ENCODE measurements at regions of chr2 and their contacts with region 1.

Region 1: DNA sequence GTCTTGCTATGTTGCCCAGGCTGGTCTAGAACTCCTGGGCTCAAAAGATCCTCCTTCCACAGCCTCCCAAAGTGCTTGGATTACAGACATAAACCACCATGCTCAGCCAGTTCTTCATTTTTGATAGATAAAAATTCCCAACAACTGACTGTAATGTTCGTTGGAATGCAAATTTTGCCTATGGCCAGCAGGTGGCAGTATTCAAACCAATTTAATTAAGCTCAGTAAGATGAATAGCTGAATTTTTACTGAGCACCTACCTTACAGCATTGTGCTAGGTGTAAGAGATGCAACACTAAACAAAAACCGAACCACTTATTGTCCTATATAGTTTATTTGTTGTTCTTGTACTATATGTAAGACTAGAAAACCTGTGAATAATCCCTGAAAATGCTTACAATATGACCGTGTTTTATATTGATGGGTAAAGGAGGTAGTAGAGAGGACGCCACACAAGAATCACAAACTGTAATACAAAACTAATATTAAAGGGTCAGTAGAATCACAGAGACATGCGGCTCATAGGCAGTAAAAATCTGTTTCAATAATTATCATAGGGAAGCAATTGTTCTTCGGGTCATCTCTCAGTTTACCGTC is 8.2 kb upstream of the TMEM182 start:
- DNase-seq: no peak
- ATAC-seq: no peak
- H3K4me3 Mint-ChIP-seq: no peak overlapping the region
- H3K27ac Mint-ChIP-seq: no peak overlapping the region
- H3K4me1 Mint-ChIP-seq: peaks cover 6% of the 10 kb centered on the region
- H3K27me3 Mint-ChIP-seq: no peaks in the 10 kb centered on the region
- CTCF ChIP-seq: peak; percentile 89

Region 2: DNA sequence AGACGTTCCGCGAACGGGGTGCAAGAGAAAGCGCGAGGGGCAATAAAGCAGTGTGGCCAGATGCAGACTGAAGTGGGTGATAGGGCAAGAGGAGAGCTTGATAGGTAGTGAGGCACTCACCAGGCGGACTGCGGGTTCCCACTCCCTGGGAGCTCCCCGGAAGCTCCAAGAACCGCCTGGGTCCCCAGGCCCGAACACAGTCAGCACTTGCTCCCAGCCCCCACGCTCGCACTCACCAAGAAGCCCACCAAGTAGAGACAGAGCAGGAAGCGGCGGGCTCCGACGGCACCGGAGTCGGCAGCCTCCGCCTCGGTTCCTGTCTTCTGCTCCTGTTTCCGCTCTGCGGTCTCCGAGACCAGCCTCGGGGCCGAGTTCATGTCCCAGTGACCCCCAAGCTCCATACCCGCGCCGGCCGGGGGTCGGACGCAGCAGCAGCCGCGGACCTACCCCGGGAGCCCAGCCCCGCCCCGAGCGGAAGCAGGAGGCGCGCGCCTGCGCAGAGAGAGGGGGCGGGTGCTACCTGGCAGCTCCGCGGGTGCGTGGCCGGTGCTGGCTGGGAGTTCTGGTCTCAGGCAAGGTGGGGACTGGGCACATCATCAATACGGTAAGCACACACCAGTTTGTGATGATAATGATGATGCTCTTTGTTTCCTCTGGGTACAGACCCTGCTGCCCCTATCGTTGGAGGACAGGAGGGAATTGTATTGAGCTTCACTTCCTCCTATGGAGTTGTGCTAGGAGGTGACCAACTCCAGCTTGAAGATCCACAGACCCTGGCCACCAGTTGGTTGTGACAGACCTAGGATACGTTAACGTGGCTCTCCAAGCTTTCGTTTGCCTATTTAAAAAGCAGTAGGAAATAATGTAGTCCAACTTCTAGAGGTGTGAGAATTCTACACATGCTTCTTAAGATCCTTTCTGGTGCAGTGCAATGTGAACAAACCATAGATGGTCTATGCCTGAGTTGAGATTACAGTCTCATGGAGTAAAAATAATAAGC is 17.0 kb before region 1 on chr2:
- CTCF ChIA-PET with region 1: interaction called, 18 read pairs
- POLR2A ChIA-PET with region 1: interaction called, 5 read pairs
- intact Hi-C with region 1: no loop called
- DNase-seq: peak; percentile 88
- ATAC-seq: peak; percentile 96
- H3K4me3 Mint-ChIP-seq: peak overlapping the region; percentile 97
- H3K27ac Mint-ChIP-seq: peak overlapping the region; percentile 85
- H3K4me1 Mint-ChIP-seq: peaks cover 35% of the 10 kb centered on the region
- H3K27me3 Mint-ChIP-seq: no peaks in the 10 kb centered on the region
- CTCF ChIP-seq: no peak

Region 3: DNA sequence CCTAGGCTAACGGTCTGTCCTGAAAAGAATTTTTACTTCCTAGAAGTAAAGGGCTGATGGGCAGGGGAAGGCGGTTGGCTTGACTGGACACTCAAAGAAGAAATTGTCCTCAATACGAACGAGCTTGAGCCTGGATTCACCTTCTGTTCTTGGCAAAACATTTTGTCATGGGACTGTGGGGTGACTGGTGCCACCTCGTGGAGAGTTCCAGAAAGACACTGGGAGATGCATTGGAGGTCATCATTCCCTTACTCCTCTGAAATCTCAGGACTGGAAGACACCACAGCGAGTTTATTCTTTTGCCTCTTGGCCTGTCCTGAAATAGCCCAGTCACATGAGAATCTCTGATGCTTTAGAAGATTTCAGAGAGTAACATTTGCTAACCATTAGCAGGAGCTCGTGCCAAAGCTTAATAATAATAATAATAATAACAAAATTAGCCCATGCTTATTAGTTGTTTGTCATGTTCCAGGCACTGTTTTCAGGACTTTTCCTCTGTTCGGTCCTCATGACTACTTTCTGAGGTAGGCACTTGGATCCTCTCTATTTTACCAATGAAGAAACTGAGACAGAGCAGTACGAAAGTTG is 52.7 kb after region 1 on chr2:
- CTCF ChIA-PET with region 1: interaction called, 8 read pairs
- POLR2A ChIA-PET with region 1: no interaction called
- intact Hi-C with region 1: loop called (anchors 2 kb)
- DNase-seq: no peak
- ATAC-seq: no peak
- H3K4me3 Mint-ChIP-seq: no peak overlapping the region
- H3K27ac Mint-ChIP-seq: no peak overlapping the region
- H3K4me1 Mint-ChIP-seq: no peaks in the 10 kb centered on the region
- H3K27me3 Mint-ChIP-seq: no peaks in the 10 kb centered on the region
- CTCF ChIP-seq: no peak

Measured in activated B cell treated with CpG ODN at 0.5 μM for 24 hours (primary cell).